ENCODE measurements at regions of chr1 and their contacts with region 1.

Region 1: DNA sequence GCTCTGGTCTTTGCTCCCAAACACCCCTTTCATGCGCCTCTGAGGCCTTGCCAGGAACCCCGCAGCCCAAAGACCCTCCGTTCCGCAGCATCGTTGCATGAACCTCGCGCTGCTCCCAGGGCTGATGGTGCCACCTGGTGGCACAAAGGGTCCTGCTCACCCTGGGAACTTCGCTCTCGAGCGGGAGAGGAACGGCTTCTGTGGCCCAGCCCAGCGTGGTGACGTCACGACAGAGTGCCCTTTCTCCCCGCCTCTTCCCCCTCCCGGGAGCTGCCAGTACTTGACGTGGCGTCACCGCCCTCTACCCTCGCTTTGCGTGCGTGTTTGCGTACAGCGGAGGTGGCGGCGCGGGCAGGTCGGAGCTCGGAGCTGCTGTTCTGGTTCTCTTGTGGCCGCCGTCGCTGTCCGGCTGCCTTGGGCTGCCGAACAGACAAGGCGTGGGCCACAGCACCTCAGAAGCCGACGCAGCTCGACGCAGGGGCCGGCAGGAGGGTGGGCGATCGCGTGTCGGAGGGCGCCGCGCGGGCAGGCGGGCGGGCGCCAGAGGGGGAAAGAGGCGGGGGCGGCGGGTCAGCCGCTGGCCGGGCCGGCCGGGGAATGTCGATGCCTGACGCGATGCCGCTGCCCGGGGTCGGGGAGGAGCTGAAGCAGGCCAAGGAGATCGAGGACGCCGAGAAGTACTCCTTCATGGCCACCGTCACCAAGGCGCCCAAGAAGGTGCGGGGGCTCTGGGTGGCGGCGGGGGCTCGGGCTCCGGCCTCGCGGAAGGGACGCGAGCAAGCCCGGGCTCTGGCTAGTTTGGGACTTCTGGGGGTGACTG is at the start of gene AHCYL1:
- DNase-seq: peak; percentile 99
- ATAC-seq: peak; percentile 96
- H3K4me3 ChIP-seq: peak within 1 kb of the TSS; percentile 63
- H3K27ac ChIP-seq: peak within 1 kb of the TSS; percentile 91
- H3K4me1 ChIP-seq: peaks cover 18% of the 10 kb centered on the region
- H3K27me3 ChIP-seq: no peaks in the 10 kb centered on the region
- CTCF ChIP-seq: peak; percentile 99
- POLR2A ChIP-seq: peak; percentile 97
- RAD21 ChIP-seq: peak; percentile 100
- total RNA-seq, gene AHCYL1: 73.9 and 76.0 TPM in 2 replicates

Region 2: DNA sequence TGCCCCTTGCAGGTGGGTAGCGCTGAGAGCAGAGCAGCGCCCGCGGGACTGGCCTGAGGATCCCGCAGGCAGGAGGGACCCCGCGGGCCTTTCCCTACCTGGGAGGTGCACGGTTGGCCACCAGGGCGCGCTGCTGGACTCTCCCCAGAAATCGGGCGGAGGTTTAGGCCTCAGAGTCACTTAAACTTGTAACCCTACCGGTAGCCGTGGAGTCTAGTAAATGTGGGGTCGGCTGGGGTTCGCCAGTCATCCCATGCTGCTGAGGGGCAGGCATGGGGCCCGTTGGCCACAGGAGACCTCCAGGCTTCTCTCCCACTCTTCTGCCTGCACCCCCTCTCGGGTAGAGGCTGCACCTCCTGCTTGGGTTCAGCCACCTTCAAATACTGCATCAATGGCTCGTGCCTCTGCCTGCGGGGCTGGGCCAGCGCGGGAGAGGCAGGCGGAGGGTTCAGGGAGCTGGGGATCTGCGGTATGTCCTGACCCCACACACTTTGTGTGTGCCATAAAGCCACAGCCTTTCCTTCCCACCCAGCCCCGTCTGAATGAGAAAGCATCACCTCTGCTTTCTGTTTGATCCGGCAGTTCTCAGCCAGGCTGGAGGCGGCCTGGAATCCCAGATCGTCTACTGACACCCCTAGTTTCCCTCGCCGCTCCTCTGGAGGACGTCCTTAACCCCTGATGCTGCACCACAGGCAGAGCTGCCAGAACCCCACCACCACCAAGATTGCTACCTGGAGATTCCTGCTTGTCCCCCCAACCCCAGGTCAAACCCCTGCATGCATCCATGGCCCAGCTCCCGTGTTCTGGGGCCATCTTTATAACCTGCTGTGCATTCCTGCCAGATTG is 341.1 kb before region 1 on chr1:
- CTCF ChIA-PET with region 1: interaction called, 23 read pairs
- POLR2A ChIA-PET with region 1: no interaction called
- dilution Hi-C with region 1: no loop called
- in situ Hi-C with region 1: loop called (anchors 5 kb)
- intact Hi-C with region 1: loop called (anchors 2 kb)
- DNase-seq: peak; percentile 65
- ATAC-seq: peak; percentile 77
- H3K4me3 ChIP-seq: no peak overlapping the region
- H3K27ac ChIP-seq: no peak overlapping the region
- H3K4me1 ChIP-seq: peaks cover 11% of the 10 kb centered on the region
- H3K27me3 ChIP-seq: no peaks in the 10 kb centered on the region
- CTCF ChIP-seq: peak; percentile 84
- POLR2A ChIP-seq: 0 out of 2 replicates have a peak, but pooled peaks have one; percentile 20
- RAD21 ChIP-seq: peak; percentile 87

Region 3: DNA sequence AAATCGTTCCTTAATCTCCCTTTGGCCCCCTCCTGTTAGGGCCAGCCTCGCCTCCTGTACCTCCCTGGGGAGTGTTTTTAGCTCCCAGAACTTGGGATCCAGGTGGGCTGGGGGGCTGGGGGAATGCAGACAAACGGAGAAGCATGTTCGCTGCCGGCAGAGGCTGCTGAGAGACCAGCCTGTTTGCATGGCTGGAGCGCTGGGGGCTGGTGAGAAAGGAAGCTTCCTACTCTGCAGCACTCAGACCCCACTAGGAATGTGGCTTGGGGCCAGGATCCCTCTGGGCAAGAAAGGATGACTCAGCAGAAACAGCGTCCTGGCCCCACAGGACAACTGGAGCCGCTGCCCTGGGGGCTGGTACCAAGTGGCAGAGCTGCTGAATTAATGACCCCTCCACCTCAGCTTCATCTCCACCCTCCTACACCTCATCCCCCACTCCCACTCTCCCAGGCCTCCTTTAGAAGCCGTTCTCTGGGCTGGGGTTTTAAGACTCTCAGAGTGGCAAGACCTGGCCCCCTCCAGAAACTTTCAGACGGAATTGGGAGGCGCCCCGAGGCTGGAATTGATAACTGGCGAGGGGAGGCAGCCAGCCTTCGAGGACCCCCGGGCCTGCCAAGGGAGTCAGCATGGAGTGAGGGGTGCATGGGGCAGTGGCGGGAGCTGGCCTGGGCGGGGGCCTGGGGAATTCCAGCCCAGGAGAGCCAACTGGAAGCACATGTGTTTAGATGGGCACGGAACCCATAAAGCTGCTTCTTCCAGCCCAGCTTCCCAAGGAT is 192.4 kb before region 1 on chr1:
- CTCF ChIA-PET with region 1: interaction called, 19 read pairs
- POLR2A ChIA-PET with region 1: no interaction called
- dilution Hi-C with region 1: no loop called
- in situ Hi-C with region 1: no loop called
- intact Hi-C with region 1: loop called (anchors 1 kb)
- DNase-seq: peak; percentile 93
- ATAC-seq: peak; percentile 81
- H3K4me3 ChIP-seq: no peak overlapping the region
- H3K27ac ChIP-seq: peak overlapping the region; percentile 58
- H3K4me1 ChIP-seq: peaks cover 37% of the 10 kb centered on the region
- H3K27me3 ChIP-seq: no peaks in the 10 kb centered on the region
- CTCF ChIP-seq: peak; percentile 70
- POLR2A ChIP-seq: no peak; the same call in 1 of the 2 replicates
- RAD21 ChIP-seq: peak; percentile 88

Region 4: GRCh38 chr1:109883248-109883955 is 101.3 kb before region 1 on chr1:
- CTCF ChIA-PET with region 1: no interaction called
- POLR2A ChIA-PET with region 1: no interaction called
- dilution Hi-C with region 1: no loop called
- in situ Hi-C with region 1: no loop called
- intact Hi-C with region 1: no loop called
- DNase-seq: no peak
- ATAC-seq: no peak
- H3K4me3 ChIP-seq: no peak overlapping the region
- H3K27ac ChIP-seq: no peak overlapping the region
- H3K4me1 ChIP-seq: peaks cover 2% of the 10 kb centered on the region; the same call in 1 of the 2 replicates
- H3K27me3 ChIP-seq: no peaks in the 10 kb centered on the region
- CTCF ChIP-seq: no peak
- POLR2A ChIP-seq: no peak
- RAD21 ChIP-seq: no peak

Region 5: DNA sequence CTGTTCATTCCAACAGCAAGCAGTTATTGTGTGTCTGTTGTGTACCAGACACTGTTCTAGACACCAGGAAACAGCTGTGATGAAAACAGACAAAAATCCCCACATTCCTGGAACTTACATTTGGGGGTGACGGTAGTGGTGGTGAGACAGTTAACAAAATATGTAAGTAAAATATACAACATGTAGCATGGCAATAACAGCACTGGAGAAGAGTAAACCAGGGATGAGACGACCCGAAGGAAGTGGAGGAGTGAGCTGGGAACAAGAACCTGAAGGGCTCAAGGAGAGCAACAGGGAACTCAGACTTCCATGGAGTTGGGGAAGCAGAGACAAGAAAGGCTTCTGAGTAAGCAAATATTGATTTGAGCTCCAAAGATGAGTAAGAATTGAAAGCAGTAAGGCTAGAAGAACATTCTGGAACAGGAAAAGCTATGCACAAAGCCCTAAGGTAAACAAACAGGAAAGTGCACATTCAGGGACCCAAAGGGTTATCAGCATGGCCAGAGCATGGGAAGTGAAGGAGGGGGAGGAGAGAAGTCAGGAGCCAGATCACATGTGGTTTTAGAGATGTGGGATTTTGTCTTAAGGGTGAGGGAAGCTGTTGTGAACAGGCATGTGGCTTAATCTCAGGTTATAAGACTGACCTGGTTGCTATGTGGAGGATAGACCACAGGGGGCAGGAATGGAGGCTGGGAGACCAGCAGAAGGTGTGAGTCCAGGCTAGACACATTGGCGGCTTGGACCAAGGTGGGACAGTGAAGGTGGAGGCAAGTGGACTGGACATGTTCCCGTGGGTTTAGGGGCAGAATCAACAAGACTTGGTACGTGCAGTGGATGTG is 66.7 kb before region 1 on chr1:
- CTCF ChIA-PET with region 1: interaction called, 21 read pairs
- POLR2A ChIA-PET with region 1: interaction called, 3 read pairs
- dilution Hi-C with region 1: no loop called
- in situ Hi-C with region 1: loop called (anchors 5 kb)
- intact Hi-C with region 1: loop called (anchors 2 kb)
- DNase-seq: peak; percentile 81
- ATAC-seq: peak; percentile 81
- H3K4me3 ChIP-seq: no peak overlapping the region
- H3K27ac ChIP-seq: peak overlapping the region; percentile 64
- H3K4me1 ChIP-seq: peaks cover 24% of the 10 kb centered on the region
- H3K27me3 ChIP-seq: no peaks in the 10 kb centered on the region
- CTCF ChIP-seq: no peak
- POLR2A ChIP-seq: no peak
- RAD21 ChIP-seq: 0 out of 2 replicates have a peak, but pooled peaks have one; percentile 5

Region 6: DNA sequence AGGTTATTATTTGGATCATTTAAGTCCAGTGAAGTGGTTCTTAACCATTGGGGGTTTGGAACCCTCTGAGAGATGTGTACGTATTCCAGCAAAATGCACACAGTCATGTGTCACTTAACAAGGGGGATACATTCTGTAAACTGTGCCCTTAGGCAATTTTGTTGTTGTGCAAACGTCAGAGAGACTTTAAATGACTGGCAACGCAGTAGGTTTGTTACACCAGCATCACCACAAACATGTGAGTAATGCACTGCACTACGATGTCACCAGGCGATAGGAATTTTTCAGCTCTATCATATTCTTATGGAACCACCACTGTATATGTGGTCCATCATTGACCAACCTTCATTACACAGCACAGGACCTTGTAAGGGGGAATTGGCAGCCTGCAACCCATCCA is 11.8 kb after region 1 on chr1:
- CTCF ChIA-PET with region 1: interaction called, 10 read pairs
- POLR2A ChIA-PET with region 1: no interaction called
- dilution Hi-C with region 1: no loop called
- in situ Hi-C with region 1: no loop called
- intact Hi-C with region 1: no loop called
- DNase-seq: peak; percentile 61
- ATAC-seq: peak; percentile 40
- H3K4me3 ChIP-seq: no peak overlapping the region
- H3K27ac ChIP-seq: no peak overlapping the region
- H3K4me1 ChIP-seq: peaks cover 6% of the 10 kb centered on the region
- H3K27me3 ChIP-seq: no peaks in the 10 kb centered on the region
- CTCF ChIP-seq: no peak
- POLR2A ChIP-seq: no peak
- RAD21 ChIP-seq: no peak

Measured in IMR-90 (cell line).